ENCODE measurements at regions of chr7 and their contacts with region 1.

Region 1: GRCh38 chr7:149422129-149422913 is 38.5 kb downstream of the ZNF777 start:
- DNase-seq: peak; percentile 74
- ATAC-seq: peak; percentile 98
- H3K4me3 Mint-ChIP-seq: peak overlapping the region; percentile 69
- H3K27ac Mint-ChIP-seq: peak overlapping the region; percentile 36
- H3K4me1 Mint-ChIP-seq: peaks cover 13% of the 10 kb centered on the region
- H3K27me3 Mint-ChIP-seq: peaks cover 15% of the 10 kb centered on the region

Region 2: DNA sequence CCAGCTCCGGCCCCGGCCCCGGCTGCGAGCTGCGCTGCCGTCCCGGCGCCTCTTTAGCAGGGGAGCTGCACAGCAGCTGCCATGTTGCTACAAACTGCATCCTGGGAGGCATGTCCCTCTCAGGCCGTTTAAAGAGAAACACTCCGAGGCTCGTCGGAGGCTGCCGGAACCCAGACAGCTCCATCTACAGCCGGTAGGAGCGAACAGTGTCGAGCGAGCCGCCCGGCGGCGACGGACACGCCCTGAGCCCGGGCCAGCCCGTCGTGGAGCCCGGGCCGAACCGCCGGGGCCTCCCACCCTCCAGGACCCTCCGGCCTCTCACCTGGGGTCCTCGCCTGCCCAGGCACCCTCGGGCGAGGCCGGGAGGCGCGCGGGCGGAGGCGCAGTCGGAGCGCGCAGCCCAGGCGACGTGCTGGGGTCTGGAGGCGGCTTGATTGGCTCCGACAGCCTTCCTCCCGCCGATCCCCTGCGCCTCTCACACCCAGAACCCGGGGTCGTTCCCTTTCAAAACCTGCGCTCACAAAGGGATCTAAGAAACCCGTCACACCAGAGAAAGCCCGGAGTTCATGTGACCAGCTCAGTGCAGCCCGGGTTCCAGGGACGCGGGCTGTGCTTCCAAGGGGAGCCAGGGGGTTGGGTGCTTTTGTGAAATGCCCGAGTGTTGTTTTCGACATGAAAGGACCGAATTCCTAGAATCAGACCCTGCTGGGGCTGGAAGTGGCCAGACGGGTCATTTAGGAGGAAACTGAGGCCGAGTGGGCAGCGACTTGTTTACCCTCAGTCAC is 38.4 kb after region 1 on chr7 and contains the start of gene ZNF777:
- CTCF ChIA-PET with region 1: interaction called, 27 read pairs
- DNase-seq: peak; percentile 90
- ATAC-seq: peak; percentile 98
- H3K4me3 Mint-ChIP-seq: peak within 1 kb of the TSS; percentile 79
- H3K27ac Mint-ChIP-seq: peak within 1 kb of the TSS; percentile 79
- H3K4me1 Mint-ChIP-seq: peaks cover 17% of the 10 kb centered on the region
- H3K27me3 Mint-ChIP-seq: peaks cover 18% of the 10 kb centered on the region
- total RNA-seq, gene ZNF777: 12.1 to 15.2 TPM

Region 3: GRCh38 chr7:149496642-149497391 is 74.5 kb after region 1 on chr7:
- CTCF ChIA-PET with region 1: interaction called, 10 read pairs
- DNase-seq: peak; percentile 70
- ATAC-seq: peak; percentile 38
- H3K4me3 Mint-ChIP-seq: peak overlapping the region; percentile 94
- H3K27ac Mint-ChIP-seq: peak overlapping the region; percentile 92
- H3K4me1 Mint-ChIP-seq: peaks cover 47% of the 10 kb centered on the region
- H3K27me3 Mint-ChIP-seq: no peaks in the 10 kb centered on the region

Measured in activated CD8-positive, alpha-beta memory T cell treated with anti-CD3 and anti-CD28 coated beads, Interleukin-2, amount 10 ng/mL, durations not matched to agents 7 days and 5 days (primary cell).